ENCODE measurements at regions of chr3 and their contacts with region 1.

Region 1: GRCh38 chr3:9067352-9067975 is 104.2 kb upstream of the RAD18 start:
- H3K4me3 Mint-ChIP-seq: no peak overlapping the region
- H3K27ac Mint-ChIP-seq: no peak overlapping the region
- H3K4me1 Mint-ChIP-seq: peaks cover 14% of the 10 kb centered on the region
- H3K27me3 Mint-ChIP-seq: no peaks in the 10 kb centered on the region

Region 2: DNA sequence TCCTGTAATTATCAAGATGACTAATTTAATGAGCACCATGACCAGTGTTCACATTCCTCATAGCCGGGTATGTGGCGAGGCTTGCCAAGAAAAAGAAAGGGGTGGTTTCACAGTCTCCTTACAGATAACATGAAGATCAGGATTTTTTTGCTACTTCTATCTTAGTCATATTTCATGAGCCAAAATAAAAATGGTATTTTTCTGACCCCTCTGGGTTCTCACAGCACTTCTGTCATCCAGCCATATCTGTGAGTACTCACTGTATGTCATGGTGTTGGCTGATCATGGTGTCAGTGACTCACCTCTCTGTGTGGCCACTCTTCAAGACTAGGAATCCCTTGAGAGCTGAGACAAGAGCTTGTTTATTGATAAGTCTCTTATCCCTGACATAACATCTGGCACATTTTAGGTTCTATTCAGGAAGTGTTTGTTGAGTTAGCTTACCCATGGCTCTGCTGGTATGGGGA is 696.3 kb before region 1 on chr3:
- intact Hi-C with region 1: no loop called
- H3K4me3 Mint-ChIP-seq: no peak overlapping the region
- H3K27ac Mint-ChIP-seq: no peak overlapping the region
- H3K4me1 Mint-ChIP-seq: no peaks in the 10 kb centered on the region
- H3K27me3 Mint-ChIP-seq: no peaks in the 10 kb centered on the region

Region 3: DNA sequence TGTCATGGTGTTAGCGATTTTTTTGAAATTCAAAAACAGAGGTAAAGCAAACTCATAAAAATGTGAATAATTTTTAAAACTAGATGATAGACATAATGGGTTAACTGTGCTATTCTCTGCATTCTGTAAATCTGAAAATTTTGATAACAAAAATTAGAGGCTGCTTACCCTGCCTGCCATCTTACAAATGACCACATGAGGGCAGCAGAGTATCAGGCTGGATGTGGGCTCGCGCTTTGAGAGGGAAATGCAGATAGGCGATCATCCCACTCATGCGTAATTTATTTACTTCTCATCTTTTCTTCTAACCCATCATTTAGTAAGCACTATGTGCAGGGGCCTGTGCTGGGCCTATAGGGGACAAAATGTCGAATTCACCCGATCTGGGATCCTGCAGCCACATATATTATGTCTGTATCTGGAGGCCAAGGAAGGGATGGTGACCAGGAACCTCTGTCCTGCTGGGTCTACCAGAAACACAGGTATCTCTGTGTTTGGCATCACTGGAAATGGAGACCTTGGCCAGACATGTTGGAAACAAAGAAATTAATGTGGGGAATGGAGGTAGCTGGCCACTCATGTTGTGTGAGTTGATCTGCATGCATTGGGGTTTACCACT is 96.4 kb before region 1 on chr3:
- intact Hi-C with region 1: loop called (anchors 1 kb)
- H3K4me3 Mint-ChIP-seq: no peak overlapping the region
- H3K27ac Mint-ChIP-seq: no peak overlapping the region
- H3K4me1 Mint-ChIP-seq: no peaks in the 10 kb centered on the region
- H3K27me3 Mint-ChIP-seq: peaks cover 6% of the 10 kb centered on the region

Region 4: DNA sequence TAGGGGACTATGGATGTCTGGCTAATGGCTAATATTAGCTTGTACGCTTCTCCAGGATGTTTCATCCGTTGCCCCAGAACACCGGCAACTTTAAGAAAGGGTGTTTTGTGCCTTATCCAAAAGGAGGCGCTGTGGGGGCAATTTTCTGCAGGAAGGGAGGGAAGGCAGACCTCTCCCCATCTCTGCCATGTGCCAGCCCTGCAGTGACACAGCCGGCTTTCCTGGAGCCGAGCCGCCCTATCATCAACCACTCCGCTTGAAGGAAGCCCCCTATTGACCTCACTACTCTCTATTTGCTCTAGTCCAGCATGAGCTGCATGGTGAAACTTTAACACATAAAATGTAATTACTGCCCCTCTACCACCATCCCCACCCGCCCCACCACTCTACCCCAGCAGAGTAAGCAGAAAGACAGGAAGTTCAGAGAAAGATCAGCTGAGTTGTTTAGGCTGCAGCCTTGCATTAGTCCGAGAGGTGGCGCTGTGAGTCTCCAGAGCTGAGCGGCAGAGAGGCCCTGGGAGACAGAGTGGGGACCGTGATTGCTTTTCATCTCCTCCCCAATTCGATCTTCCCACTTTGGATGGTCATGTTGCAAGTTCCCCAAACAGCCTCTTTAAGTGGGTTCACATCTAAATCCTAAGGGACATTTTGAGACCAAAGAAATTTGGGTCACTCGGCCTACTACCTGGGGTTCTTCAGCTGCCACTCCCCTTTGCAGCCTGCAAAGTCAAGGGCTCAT is 79.7 kb before region 1 on chr3:
- intact Hi-C with region 1: loop called (anchors 1 kb)
- H3K4me3 Mint-ChIP-seq: peak overlapping the region; percentile 39
- H3K27ac Mint-ChIP-seq: no peak overlapping the region
- H3K4me1 Mint-ChIP-seq: peaks cover 14% of the 10 kb centered on the region
- H3K27me3 Mint-ChIP-seq: no peaks in the 10 kb centered on the region

Region 5: DNA sequence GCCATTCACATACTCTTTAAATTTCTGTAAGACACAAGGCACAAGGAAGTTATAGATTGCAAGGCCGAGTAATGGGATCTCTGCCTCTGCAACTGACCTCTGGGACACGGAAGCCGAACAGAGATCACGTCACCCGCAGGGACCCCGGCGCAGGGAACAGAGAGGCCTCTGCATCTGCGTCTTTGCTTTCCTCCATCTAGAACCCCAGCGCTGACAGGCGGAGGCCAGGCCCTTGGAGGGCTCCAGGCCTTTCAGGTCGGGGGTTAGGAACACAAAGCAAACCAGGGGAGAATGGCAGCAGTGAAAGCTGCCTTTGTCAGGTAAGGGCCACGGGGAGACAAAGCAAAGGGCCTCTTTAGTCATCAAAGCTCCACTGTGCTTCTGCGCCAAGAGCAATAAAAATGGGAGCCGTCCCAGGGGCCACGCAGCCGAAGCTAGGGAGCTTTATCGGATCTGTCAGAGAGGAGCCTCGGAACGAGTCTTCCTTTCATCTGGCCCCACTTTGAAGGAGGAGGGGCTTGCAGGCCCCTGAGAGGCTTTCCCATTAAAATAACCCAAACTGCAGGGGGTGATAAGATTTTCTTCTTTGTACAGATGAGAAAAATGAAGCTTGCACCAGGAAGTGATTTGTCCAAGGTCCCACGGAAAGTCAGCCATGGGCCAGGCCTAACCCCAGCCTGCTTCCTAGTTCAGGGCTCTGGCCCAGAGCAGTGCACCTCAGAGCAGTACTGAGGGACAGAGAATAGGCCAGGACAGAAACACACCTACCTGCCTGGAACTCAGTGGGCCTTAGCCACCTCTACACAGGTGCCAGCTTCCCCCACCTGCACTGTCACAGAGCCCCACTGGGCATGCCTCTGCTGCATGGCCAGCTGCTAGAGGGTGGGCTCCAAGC is 19.8 kb before region 1 on chr3:
- intact Hi-C with region 1: no loop called
- H3K4me3 Mint-ChIP-seq: no peak overlapping the region
- H3K27ac Mint-ChIP-seq: no peak overlapping the region
- H3K4me1 Mint-ChIP-seq: no peaks in the 10 kb centered on the region
- H3K27me3 Mint-ChIP-seq: no peaks in the 10 kb centered on the region

Region 6: GRCh38 chr3:9226326-9226725 is 158.9 kb after region 1 on chr3:
- intact Hi-C with region 1: no loop called
- H3K4me3 Mint-ChIP-seq: no peak overlapping the region
- H3K27ac Mint-ChIP-seq: no peak overlapping the region
- H3K4me1 Mint-ChIP-seq: peaks cover 12% of the 10 kb centered on the region
- H3K27me3 Mint-ChIP-seq: no peaks in the 10 kb centered on the region